Gastrocnemius medialis (tissue), 4 donors: ENCODE measurements at regions of chr9 and their contacts with region 1.

Region 1: DNA sequence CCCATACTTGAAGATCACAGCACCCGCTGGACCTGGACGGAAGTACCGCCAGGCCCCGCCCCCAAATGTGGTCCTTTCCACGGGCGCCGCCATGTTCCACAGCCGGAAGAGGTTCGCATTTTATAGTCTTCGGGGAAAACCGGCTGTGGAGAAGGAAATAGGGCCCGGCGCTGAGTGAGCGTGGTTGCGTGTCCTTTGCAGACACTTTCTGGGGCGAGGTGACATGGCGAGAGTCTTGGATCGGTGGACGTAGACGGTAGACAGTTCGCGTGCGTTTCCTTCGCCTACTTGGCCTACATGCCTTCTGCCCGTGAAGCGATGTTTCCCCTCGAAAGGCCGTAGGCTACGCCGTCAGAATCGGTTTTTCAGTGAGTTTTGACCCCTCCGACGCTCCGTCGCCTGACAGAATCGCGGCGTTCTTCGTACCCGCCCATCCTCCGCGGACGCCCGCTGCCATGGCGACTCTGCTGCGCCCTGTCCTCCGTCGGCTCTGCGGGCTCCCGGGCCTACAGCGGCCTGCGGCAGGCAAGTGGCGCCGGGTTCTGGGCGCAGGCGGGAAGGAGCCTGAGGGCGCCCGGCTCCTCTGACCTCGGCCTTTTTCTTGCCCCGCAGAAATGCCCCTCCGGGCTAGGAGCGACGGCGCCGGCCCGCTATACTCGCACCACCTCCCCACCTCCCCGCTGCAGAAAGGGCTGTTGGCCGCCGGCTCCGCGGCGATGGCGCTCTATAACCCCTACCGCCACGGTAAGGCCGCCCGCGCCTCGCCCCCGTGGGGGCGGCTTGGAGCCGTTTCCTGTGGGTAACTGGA is at the starts of genes COQ4 and TRUB2:
- DNase-seq: peak; percentile 91 to 92
- ATAC-seq: peak; percentile 99
- H3K4me3 ChIP-seq: peak within 1 kb of the TSS; percentile 75 to 97 (median 94)
- H3K27ac ChIP-seq: peak within 1 kb of the TSS; percentile 83 to 95 (median 92)
- H3K4me1 ChIP-seq: peaks cover 16 to 35% of the 10 kb centered on the region in 2 donors
- H3K27me3 ChIP-seq: no peaks in the 10 kb centered on the region
- CTCF ChIP-seq: peak in 1 of 5 experiments; percentile 18
- POLR2A ChIP-seq: no peak
- total RNA-seq, gene COQ4: 25.1 to 42.4 (median 34.3) TPM
- total RNA-seq, gene TRUB2: 7.1 to 18.1 (median 14.3) TPM

Region 2: GRCh38 chr9:128275996-128276573 is 46.5 kb before region 1 on chr9 and contains the starts of genes GOLGA2 and SWI5:
- in situ Hi-C with region 1: no loop called
- intact Hi-C with region 1: loop called (anchors 2 kb)
- DNase-seq: peak; percentile 100
- ATAC-seq: peak; percentile 94 to 97
- H3K4me3 ChIP-seq: peak within 1 kb of the TSS; percentile 85 to 99 (median 94)
- H3K27ac ChIP-seq: peak within 1 kb of the TSS; percentile 91 to 93 (median 92)
- H3K4me1 ChIP-seq: peaks cover 19 to 29% of the 10 kb centered on the region in 2 donors
- H3K27me3 ChIP-seq: no peaks in the 10 kb centered on the region
- CTCF ChIP-seq: no peak
- POLR2A ChIP-seq: peak; percentile 91 to 95
- total RNA-seq, gene GOLGA2: 68.9 to 84.6 (median 78.5) TPM
- total RNA-seq, gene SWI5: 12.7 to 23.8 (median 13.5) TPM

Region 3: DNA sequence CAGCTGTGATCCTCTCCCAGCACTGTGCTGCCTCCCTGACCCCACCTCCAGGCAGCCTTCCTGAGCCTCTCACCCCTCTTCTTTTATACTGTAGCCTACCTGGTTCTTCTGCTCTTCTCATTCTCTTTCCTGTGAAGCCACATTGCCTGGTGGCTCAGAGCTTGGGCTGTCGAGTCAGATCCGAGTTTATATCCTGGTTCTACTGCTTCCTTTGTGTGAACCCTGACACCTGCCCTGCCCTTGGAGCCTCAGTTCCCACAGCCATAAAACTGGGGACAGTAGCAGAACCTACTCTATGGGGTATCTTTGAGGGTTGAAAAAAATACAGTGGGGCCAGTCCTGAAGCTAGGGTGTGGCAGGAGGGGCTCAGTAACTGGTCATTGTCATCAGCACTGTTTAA is 26.5 kb after region 1 on chr9:
- in situ Hi-C with region 1: no loop called
- intact Hi-C with region 1: no loop called
- DNase-seq: no peak
- ATAC-seq: no peak
- H3K4me3 ChIP-seq: no peak overlapping the region
- H3K27ac ChIP-seq: no peak overlapping the region
- H3K4me1 ChIP-seq: no peaks in the 10 kb centered on the region
- H3K27me3 ChIP-seq: no peaks in the 10 kb centered on the region
- CTCF ChIP-seq: no peak
- POLR2A ChIP-seq: no peak

Region 4: GRCh38 chr9:128529191-128529590 is 206.6 kb after region 1 on chr9:
- in situ Hi-C with region 1: no loop called
- intact Hi-C with region 1: no loop called
- DNase-seq: no peak
- ATAC-seq: no peak
- H3K4me3 ChIP-seq: no peak overlapping the region
- H3K27ac ChIP-seq: no peak overlapping the region
- H3K4me1 ChIP-seq: no peaks in the 10 kb centered on the region
- H3K27me3 ChIP-seq: no peaks in the 10 kb centered on the region
- CTCF ChIP-seq: no peak
- POLR2A ChIP-seq: no peak